ENCODE measurements at regions of chr9 and their contacts with region 1.

Region 1: GRCh38 chr9:15422372-15423230 is at the start of gene SNAPC3:
- DNase-seq: peak; percentile 94
- H3K4me3 ChIP-seq: peak within 1 kb of the TSS; percentile 88
- H3K27ac ChIP-seq: peak within 1 kb of the TSS; percentile 97
- H3K4me1 ChIP-seq: peaks cover 54% of the 10 kb centered on the region
- H3K27me3 ChIP-seq: no peaks in the 10 kb centered on the region
- CTCF ChIP-seq: peak; percentile 15
- total RNA-seq, gene SNAPC3: 32.2 TPM

Region 2: GRCh38 chr9:15306757-15307534 is 115.7 kb before region 1 on chr9 and contains the start of gene TTC39B:
- intact Hi-C with region 1: loop called (anchors 10 kb)
- DNase-seq: peak; percentile 93
- H3K4me3 ChIP-seq: peak within 1 kb of the TSS; percentile 97
- H3K27ac ChIP-seq: peak within 1 kb of the TSS; percentile 86
- H3K4me1 ChIP-seq: peaks cover 25% of the 10 kb centered on the region
- H3K27me3 ChIP-seq: peaks cover 7% of the 10 kb centered on the region
- CTCF ChIP-seq: no peak
- total RNA-seq, gene TTC39B: 1.6 TPM

Region 3: DNA sequence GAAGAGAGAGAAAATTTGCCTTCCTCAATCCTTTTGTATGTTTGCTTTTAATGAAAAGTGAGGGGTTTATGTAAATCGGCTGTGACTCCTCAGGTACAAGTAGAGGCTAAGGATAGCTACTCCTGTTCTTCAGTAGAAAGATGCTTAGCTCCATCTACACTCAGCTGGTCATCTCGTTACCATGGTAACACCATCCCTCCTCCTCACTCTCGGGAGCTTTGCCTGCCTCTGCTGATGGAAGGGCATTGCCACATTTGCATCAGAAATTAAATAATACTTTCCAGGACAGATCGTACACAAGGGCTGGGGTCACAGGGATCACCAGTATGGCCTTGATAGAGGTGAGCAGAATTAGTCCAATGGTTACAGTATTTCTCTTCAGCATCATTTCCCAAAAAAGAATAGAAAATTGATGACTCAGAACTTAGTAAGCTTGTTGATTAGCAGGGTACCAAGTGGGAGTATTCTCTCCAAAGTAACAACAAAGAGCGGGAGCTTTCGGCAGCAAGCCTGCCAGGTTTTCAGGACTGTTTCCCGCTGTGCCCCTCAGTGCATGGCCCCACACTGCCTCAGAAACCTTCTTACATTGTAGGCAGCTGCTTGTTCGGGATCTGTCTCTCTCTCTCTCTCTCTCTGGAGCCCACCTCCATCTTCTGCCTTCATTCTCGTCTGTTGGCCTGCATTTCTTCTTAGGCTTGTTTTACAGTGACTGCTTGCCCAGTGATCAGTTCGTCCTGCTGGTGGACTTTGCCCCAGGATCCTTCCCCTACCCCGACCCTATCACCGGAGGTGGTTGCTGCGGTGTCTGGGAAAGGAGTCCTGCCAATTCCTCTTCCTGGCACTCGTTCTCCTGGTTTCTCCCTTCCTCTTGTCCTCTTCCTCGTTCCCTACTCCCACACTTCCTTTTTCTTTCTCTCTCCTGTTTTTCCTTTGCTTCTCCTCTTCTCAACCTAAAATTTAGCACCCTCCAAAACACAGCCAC is 51.8 kb before region 1 on chr9:
- intact Hi-C with region 1: no loop called
- DNase-seq: no peak
- H3K4me3 ChIP-seq: no peak overlapping the region
- H3K27ac ChIP-seq: no peak overlapping the region
- H3K4me1 ChIP-seq: no peaks in the 10 kb centered on the region
- H3K27me3 ChIP-seq: peaks cover 11% of the 10 kb centered on the region
- CTCF ChIP-seq: no peak

Measured in left ventricle myocardium inferior (tissue), 1 donor.